ENCODE measurements at regions of chr3 and their contacts with region 1.

Region 1: DNA sequence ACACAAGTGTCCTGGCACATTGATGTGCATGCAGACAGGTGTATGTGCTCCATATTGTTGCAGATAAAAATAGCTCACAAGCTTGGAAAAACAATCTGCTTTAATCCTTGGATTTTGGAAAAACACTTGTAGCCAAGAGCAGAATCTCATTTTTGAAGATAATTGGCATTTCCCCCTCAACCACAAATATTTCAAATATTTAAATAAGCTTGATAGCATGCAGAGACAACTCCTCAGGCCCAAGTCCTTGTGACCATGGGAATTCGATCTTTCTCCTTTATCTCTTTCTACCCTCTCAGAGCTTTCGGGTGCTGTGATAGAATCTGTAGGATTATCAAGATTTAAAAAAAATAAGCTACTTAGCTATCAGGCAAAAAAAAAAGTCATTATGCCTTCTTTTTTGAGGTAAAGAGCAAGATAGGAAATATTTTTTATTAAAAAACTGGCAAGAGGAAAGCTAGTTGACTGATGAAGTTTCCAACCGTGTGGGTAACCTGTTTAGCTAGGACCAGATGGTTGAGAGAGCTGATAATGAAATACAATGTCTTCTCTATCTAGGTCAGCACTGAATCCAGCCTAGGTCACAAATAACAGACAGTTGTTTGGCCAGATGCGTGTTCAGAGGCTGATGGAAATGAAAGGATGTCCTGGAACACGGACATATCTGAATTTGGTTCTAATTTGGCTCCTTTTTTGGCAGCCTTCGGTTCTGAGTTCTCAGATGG is 54.9 kb upstream of the SNRK start:
- DNase-seq: no peak
- ATAC-seq: no peak
- H3K4me3 ChIP-seq: no peak overlapping the region
- H3K27ac ChIP-seq: no peak overlapping the region
- H3K4me1 ChIP-seq: no peaks in the 10 kb centered on the region
- H3K27me3 ChIP-seq: no peaks in the 10 kb centered on the region

Region 2: GRCh38 chr3:42819351-42819965 is 412.0 kb before region 1 on chr3:
- intact Hi-C with region 1: no loop called
- DNase-seq: no peak
- ATAC-seq: no peak
- H3K4me3 ChIP-seq: no peak overlapping the region
- H3K27ac ChIP-seq: no peak overlapping the region
- H3K4me1 ChIP-seq: peaks cover 2% of the 10 kb centered on the region
- H3K27me3 ChIP-seq: no peaks in the 10 kb centered on the region

Region 3: DNA sequence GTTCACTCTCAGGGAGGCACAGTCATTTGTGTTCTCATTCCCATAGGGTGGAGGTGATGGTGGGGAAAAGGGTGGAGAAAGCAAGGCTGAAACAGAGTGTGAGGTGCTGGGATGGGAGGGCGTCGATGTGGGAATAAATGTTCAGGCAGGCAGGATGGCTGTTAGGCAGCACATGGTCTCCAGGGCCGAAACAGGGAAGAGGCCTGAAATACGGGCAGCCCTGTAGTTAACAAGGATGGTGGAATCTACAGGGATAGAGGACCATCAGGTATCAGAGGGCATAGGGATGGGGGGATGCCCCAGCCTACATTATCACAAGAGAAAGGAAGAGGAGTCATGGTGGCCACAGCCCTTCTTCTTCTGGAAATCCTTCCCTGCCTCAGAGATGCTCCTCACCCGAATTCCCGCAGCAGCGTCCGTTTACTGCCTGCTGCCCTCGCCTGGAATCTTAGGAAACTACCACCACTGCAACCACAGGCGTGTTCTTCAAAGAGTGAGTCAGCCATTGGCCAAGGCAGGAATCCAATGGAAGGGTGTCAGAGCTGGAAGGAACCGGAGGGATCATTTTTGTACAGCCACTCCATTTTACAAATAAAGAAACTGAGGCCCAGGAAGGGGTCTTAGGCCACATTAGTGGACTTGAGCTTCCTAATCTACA is 75.8 kb before region 1 on chr3:
- intact Hi-C with region 1: no loop called
- DNase-seq: peak; percentile 73 to 86 (median 83)
- ATAC-seq: peak; percentile 82 to 84
- H3K4me3 ChIP-seq: no peak overlapping the region
- H3K27ac ChIP-seq: no peak overlapping the region
- H3K4me1 ChIP-seq: peaks cover 6% of the 10 kb centered on the region
- H3K27me3 ChIP-seq: no peaks in the 10 kb centered on the region

Region 4: GRCh38 chr3:43260412-43260811 is 29.0 kb after region 1 on chr3:
- intact Hi-C with region 1: no loop called
- DNase-seq: no peak
- ATAC-seq: no peak
- H3K4me3 ChIP-seq: no peak overlapping the region
- H3K27ac ChIP-seq: no peak overlapping the region
- H3K4me1 ChIP-seq: no peaks in the 10 kb centered on the region
- H3K27me3 ChIP-seq: no peaks in the 10 kb centered on the region

Region 5: GRCh38 chr3:43286115-43286840 is 54.8 kb after region 1 on chr3 and contains the start of gene SNRK:
- intact Hi-C with region 1: loop called in 1 of 4 experiments (anchors 5 kb)
- DNase-seq: peak; percentile 89 to 97 (median 95)
- ATAC-seq: peak; percentile 94 to 96
- H3K4me3 ChIP-seq: peak within 1 kb of the TSS; percentile 97
- H3K27ac ChIP-seq: peak within 1 kb of the TSS; percentile 93
- H3K4me1 ChIP-seq: peaks cover 8% of the 10 kb centered on the region
- H3K27me3 ChIP-seq: no peaks in the 10 kb centered on the region
- total RNA-seq, gene SNRK: 23.6 to 29.0 (median 27.2) TPM